GM12878 (cell line): ENCODE measurements at regions of chr17 and their contacts with region 1.

Region 1: GRCh38 chr17:7214300-7215135 is 5.1 kb downstream of the DLG4 start:
- DNase-seq: peak; percentile 89
- ATAC-seq: peak; percentile 91
- H3K4me3 ChIP-seq: peak overlapping the region; percentile 72
- H3K27ac ChIP-seq: no peak overlapping the region; the same call in 1 of the 2 replicates
- H3K4me1 ChIP-seq: peaks cover 18% of the 10 kb centered on the region
- H3K27me3 ChIP-seq: no peaks in the 10 kb centered on the region
- CTCF ChIP-seq: peak; percentile 56 to 59 (median 56); a peak in 5 of 6 replicates
- EP300 ChIP-seq: no peak
- POLR2A ChIP-seq: no peak
- RAD21 ChIP-seq: no peak

Region 2: DNA sequence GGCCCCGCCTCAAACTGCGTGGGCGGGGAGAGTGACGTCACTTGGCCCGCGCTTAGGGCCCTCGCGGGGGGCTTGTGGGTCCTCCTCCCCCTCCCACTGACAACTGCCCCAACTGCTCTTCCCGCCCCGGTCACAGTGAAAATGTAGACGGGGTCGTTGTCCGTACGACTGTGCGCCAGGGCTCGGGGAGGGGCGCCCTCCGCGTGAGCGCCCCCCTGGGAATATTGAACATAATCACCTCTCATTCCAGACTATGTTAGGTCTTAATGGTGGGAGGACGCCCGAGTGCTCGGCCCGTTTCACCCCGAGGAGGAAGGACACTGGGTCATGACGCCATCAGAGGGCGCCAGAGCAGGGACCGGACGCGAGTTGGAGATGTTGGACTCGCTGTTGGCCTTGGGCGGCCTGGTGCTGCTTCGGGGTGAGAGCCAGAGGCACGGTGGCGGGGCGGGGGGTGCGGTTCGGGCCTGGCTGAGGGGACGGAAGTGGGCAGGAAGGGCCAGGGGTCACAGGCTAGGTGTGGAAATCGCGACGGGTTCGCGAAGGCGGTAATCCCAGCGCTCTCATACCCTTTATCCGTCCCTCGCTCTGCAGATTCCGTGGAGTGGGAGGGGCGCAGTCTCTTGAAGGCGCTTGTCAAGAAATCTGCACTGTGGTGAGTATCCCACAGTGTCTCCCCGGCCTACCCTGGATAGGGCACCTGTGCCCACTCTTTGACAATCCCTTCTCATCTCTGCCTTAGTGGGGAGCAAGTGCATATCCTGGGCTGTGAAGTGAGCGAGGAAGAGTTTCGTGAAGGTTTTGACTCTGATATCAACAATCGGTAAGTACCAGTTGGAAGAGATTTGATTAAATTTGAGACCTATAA is 37.9 kb after region 1 on chr17 and contains the start of gene ELP5:
- CTCF ChIA-PET with region 1: interaction called, 18 read pairs
- POLR2A ChIA-PET with region 1: interaction called, 29 read pairs
- RAD21 ChIA-PET with region 1: interaction called, 3 read pairs
- SMC1A ChIA-PET with region 1: interaction called, 4 read pairs
- in situ Hi-C with region 1: no loop called
- intact Hi-C with region 1: loop called (anchors 2 kb)
- DNase-seq: peak; percentile 82
- ATAC-seq: peak; percentile 76
- H3K4me3 ChIP-seq: peak within 1 kb of the TSS; percentile 90
- H3K27ac ChIP-seq: peak within 1 kb of the TSS; percentile 99
- H3K4me1 ChIP-seq: peaks cover 10% of the 10 kb centered on the region
- H3K27me3 ChIP-seq: no peaks in the 10 kb centered on the region
- CTCF ChIP-seq: peak; percentile 11 to 42 (median 37); a peak in 3 of 6 replicates
- EP300 ChIP-seq: no peak
- POLR2A ChIP-seq: peak; percentile 98
- RAD21 ChIP-seq: no peak
- polyA plus RNA-seq, gene ELP5: 81.8 to 94.7 TPM

Region 3: GRCh38 chr17:7363311-7363710 is 148.8 kb after region 1 on chr17:
- CTCF ChIA-PET with region 1: no interaction called
- POLR2A ChIA-PET with region 1: no interaction called
- RAD21 ChIA-PET with region 1: no interaction called
- SMC1A ChIA-PET with region 1: no interaction called
- in situ Hi-C with region 1: no loop called
- intact Hi-C with region 1: no loop called
- DNase-seq: no peak
- ATAC-seq: no peak
- H3K4me3 ChIP-seq: no peak overlapping the region
- H3K27ac ChIP-seq: no peak overlapping the region
- H3K4me1 ChIP-seq: no peaks in the 10 kb centered on the region
- H3K27me3 ChIP-seq: no peaks in the 10 kb centered on the region
- CTCF ChIP-seq: no peak
- EP300 ChIP-seq: no peak
- POLR2A ChIP-seq: no peak
- RAD21 ChIP-seq: no peak